ENCODE measurements at regions of chr12 and their contacts with region 1.

Region 1: DNA sequence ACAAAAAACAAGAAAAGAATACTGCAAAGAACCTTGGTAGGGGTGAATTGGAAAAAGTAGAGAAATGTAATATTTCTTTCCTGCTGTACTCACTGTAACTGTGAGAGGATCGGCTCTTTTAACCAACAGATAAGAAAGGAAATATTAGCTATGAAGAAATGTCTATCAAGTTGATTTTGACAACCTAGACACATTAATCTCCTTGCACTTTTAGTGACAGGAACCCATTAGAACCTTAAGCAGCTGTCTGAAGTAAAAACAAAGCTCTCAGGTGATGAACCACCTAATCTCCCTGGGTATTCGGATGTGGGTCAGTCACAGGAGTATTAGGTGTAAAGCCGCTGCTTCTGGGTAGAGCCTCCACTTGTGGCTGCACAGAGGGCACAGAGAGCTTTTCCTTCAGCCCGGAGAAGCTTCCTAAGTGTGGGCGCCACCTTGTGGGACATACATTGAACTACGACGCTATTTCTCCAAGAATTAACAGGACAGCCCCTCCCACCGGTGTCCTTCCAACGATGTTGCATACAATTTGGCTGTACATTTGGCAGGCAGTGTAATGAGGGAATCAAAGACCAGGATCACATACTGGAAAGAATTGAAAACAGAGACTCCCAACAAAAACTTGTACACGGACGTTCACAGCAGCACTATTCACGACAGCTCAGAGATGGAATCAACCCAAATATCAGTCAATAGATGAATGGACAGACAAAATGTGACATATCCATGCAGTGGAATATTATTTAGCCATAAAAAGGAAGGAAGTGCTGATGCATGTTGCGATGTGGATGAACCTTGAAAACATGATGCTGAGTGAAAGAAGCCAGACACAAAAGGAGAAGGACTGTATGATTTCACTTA is 28.9 kb upstream of the MAPKAPK5 start:
- DNase-seq: peak; percentile 73
- ATAC-seq: peak; percentile 93

Region 2: DNA sequence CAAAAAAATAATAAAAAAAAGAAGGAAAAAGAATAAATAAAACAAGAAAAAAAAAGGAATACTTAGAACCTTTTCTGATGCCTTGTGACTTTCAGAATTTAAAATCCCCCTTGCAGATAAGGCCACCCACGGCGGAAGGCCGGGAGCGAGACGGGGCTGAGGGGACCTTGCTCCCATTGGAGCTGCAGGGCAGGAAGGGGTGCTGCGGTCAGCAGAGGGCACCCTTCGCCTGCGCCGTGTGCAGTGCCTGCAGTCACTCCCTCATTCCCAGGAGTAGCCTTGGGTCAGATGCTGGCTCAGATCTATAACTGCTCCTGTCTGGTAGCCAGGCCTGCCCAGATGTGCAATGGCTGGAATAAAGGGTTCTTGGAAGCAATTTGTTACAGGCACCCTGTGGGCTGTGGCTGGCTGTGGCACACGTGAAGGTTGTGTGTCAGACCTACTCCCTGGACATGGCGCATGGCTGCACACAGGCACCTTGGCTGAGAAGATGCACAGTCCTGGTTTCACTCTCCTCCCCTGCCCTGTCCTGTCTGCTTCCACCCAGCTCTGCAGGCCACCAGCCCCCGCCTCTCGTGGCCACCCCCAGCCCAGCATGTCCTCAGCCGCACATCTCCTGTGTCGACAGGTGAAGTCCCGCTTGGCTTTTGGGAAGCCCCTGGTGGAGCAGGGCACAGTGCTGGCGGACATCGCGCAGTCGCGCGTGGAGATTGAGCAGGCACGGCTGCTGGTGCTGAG is 59.8 kb before region 1 on chr12:
- intact Hi-C with region 1: loop called (anchors 10 kb)
- DNase-seq: peak; percentile 83
- ATAC-seq: peak; percentile 75

Region 3: GRCh38 chr12:111953455-111953854 is 140.3 kb after region 1 on chr12:
- intact Hi-C with region 1: no loop called
- DNase-seq: no peak
- ATAC-seq: peak; percentile 39